ENCODE measurements at regions of chr1 and their contacts with region 1.

Region 1: GRCh38 chr1:85692730-85693314 is 15.4 kb downstream of the ZNHIT6 start:
- H3K4me3 ChIP-seq: no peak overlapping the region
- H3K27ac ChIP-seq: no peak overlapping the region
- H3K4me1 ChIP-seq: no peaks in the 10 kb centered on the region
- CTCF ChIP-seq: 0 out of 2 replicates have a peak, but pooled peaks have one; percentile 8

Region 2: DNA sequence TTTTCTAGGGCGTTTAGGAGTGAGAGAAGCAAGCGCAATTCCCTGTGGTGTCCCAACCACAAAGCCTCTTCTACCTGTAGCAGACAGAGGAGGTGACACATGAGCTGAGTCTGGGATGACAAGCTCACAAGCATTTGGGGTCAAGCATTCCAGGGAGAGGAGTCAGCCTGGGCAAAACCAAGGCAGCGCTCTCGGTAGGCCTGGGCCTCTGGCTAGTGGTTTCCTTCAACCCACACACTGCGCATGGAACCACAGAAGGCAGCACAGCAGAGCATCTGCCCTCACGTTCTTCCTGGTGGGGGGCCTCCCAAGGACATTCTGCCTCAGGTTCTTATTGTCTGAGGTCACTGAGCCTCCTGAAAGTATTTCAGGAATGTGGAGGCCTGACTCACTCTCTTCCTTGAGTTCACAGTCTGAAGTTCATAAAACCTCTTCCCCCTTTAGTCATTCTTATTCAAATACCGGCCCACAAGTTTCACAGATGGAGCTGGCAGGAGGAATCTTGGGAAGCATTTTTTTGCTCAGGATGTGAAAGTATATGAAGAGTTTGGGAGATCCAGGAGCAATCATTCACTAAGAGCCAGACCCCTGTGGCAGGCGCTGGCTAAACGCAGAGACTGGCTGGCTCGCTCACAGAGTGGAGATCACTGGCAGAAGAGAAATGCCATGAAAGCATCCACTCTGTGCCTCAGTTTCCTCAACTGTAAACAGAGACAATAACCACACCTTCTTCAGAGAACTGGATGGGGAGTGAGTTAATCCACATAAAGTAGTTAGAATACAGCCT is 85.5 kb before region 1 on chr1:
- CTCF ChIA-PET with region 1: interaction called, 22 read pairs
- POLR2A ChIA-PET with region 1: no interaction called
- H3K4me3 ChIP-seq: no peak overlapping the region
- H3K27ac ChIP-seq: no peak overlapping the region
- H3K4me1 ChIP-seq: no peaks in the 10 kb centered on the region
- CTCF ChIP-seq: no peak

Region 3: DNA sequence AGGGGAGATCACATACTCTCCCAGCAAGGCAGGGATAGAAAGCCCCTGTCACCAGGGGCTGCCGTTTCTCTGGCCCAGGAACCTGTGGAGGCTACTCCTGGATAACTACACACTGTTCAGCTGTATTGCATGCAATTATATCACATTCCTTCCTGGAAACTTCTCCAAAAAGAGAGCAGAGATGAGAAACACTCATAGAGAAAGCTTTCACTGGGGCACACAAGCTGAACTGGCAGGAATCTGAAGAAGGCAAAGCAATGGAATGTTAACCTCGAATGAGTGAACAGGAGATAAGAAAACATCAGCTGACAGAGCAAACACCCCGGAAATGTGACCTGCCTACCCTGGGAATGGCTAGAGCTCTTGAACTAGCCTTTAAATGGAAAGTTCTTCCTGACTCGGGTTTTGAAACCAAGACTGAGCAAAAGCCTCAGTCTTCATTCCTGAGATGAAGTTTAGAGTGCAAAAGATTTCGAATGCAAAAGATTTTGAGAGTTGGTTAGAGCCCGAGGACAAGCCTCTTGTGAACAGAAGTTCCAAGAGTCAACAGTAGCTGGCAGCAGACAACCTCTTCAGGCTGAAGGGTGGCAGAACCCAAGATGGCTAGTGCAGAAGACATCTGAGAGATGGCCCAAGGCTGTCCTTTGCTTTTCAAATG is 80.0 kb before region 1 on chr1:
- CTCF ChIA-PET with region 1: interaction called, 22 read pairs
- POLR2A ChIA-PET with region 1: no interaction called
- H3K4me3 ChIP-seq: no peak overlapping the region
- H3K27ac ChIP-seq: no peak overlapping the region
- H3K4me1 ChIP-seq: no peaks in the 10 kb centered on the region
- CTCF ChIP-seq: no peak

Measured in HEK293 (cell line).